ENCODE measurements at regions of chr11 and their contacts with region 1.

Region 1: DNA sequence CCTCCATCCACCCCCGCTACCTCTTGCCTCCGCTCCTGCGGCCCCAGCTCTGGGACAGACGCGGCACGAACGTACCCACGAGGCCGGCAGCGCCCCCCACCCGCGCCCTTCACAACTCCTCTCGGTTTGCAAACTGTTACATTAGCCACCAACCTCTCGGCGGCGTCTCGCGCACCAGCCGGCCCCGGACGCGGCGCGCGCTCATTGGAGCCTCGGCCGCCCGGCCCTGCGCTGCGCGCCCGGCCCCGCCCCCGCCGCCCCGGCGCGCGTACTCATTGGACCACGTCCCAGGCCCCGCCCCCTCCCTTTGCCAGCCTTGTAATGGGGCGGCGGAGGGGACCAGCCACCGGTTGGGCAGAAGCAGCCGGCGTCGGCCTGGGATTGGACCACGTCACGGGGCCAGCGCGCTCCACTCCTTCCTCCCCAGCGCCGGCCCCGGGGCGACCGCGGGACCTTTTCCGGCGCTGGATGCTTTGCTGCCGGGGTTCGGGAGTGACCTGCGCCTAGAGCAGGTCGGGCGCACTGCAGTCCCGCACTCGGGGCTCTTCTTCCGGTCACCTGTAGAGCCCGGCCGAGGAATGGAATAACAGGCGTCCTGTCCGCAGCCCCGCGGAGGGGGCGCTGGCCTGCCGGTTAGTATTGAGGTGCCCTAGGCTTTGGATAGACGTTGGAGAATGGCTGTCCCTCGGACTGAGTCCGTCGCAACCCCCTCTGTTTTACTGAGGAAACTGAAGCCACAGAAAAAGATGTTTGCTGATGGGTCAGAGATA is at the start of gene HYOU1:
- DNase-seq: peak; percentile 99
- H3K4me3 Mint-ChIP-seq: peak within 1 kb of the TSS; percentile 96
- H3K27ac Mint-ChIP-seq: peak within 1 kb of the TSS; percentile 94
- H3K4me1 Mint-ChIP-seq: peaks cover 38% of the 10 kb centered on the region
- H3K27me3 Mint-ChIP-seq: no peaks in the 10 kb centered on the region
- total RNA-seq, gene HYOU1: 127 to 136 TPM

Region 2: GRCh38 chr11:118980191-118980881 is 76.8 kb before region 1 on chr11:
- CTCF ChIA-PET with region 1: no interaction called
- POLR2A ChIA-PET with region 1: no interaction called
- intact Hi-C with region 1: no loop called
- DNase-seq: no peak
- H3K4me3 Mint-ChIP-seq: no peak overlapping the region
- H3K27ac Mint-ChIP-seq: no peak overlapping the region
- H3K4me1 Mint-ChIP-seq: no peaks in the 10 kb centered on the region
- H3K27me3 Mint-ChIP-seq: peaks cover 6% of the 10 kb centered on the region

Region 3: DNA sequence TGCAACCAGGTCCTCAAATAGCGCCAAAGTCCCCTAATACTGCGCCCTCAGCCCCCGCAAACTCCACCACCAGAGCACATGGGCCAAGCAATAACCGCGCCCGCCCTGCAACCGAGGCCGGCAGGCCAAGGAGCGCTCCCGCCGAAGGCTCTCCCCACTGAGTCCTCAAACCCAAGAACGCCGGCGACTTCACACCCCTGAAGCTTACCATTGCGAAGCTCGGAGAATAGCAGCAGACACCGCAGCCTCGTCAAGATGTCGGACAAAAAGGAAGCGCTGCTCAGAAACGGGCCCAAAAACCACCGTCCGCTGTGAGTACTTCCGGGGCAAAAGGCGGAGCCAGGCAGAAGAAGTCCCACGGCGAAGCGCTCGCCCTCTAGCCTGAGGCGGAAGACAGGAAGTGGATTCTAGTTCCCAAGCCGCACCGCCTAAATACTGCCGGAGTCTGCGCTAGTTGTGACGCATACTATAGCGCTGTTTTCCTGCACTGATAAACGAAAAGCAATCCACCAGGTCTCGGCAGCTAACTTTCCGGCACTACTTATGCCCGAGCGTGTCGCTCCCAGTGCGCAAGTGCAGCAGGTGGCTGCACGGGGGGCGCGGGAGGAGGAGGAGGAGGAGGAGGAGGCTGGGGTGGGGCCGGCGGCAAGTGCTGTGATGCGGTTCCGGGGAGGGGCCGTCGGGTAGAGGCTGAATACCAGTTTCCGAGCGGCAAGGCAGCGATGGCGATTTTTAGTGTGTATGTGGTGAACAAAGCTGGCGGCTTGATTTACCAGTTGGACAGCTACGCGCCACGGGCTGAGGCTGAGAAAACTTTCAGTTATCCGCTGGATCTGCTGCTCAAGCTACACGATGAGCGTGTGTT is 38.9 kb before region 1 on chr11 and contains the starts of genes RPS25 and TRAPPC4:
- CTCF ChIA-PET with region 1: interaction called, 5 read pairs
- POLR2A ChIA-PET with region 1: interaction called, 3 read pairs
- intact Hi-C with region 1: loop called (anchors 1 kb)
- DNase-seq: peak; percentile 98
- H3K4me3 Mint-ChIP-seq: peak within 1 kb of the TSS; percentile 99
- H3K27ac Mint-ChIP-seq: peak within 1 kb of the TSS; percentile 99
- H3K4me1 Mint-ChIP-seq: peaks cover 54% of the 10 kb centered on the region
- H3K27me3 Mint-ChIP-seq: no peaks in the 10 kb centered on the region
- total RNA-seq, gene RPS25: 1,852 to 1,922 TPM
- total RNA-seq, gene TRAPPC4: 86.4 to 87.8 TPM

Region 4: DNA sequence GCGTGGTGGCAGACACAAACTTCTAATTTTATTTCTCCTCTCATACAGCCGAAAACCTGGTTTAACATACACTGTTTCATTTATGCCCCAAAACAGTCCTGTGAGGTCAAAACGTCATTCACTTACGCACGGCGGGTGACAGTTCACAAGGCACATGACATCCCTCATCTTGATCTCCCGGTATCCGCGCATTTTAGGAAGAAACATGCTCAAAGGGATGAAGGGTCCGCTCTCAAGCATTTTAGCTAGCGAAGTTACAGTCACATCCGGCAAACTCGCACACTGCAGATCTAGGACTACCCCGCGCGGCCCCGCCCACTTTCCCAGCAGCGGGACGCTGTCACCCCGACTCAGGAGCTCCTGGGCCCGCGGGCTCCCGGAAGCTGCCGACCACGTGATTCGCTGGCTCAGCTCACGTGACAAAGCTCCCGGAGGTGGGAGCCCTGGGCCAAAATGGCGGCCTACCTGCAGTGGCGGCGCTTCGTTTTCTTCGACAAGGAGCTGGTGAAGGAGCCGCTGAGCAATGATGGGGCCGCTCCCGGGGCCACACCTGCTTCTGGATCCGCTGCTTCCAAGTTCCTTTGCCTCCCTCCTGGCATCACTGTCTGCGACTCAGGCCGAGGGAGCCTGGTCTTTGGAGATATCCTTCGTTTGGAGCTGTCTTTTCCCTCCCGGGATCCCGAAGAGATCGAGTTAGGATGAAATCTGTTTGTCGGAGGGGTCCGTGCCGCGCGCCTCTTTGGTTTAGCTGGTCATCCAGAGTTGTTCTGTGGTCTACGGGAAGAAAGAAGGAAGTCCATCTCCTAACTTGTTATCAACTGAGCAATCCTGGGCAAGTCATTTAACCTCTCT is 10.4 kb after region 1 on chr11 and contains the start of gene VPS11:
- CTCF ChIA-PET with region 1: interaction called, 12 read pairs
- POLR2A ChIA-PET with region 1: interaction called, 35 read pairs
- intact Hi-C with region 1: loop called (anchors 1 kb)
- DNase-seq: peak; percentile 99
- H3K4me3 Mint-ChIP-seq: peak within 1 kb of the TSS; percentile 96
- H3K27ac Mint-ChIP-seq: peak within 1 kb of the TSS; percentile 97
- H3K4me1 Mint-ChIP-seq: peaks cover 38% of the 10 kb centered on the region
- H3K27me3 Mint-ChIP-seq: no peaks in the 10 kb centered on the region
- total RNA-seq, gene VPS11: 19.2 to 21.1 TPM

Region 5: GRCh38 chr11:119084663-119085436 is 27.7 kb after region 1 on chr11 and contains the start of gene HMBS:
- CTCF ChIA-PET with region 1: interaction called, 4 read pairs
- POLR2A ChIA-PET with region 1: interaction called, 13 read pairs
- intact Hi-C with region 1: no loop called
- DNase-seq: peak; percentile 93
- H3K4me3 Mint-ChIP-seq: peak within 1 kb of the TSS; percentile 98
- H3K27ac Mint-ChIP-seq: peak within 1 kb of the TSS; percentile 95
- H3K4me1 Mint-ChIP-seq: peaks cover 21% of the 10 kb centered on the region
- H3K27me3 Mint-ChIP-seq: no peaks in the 10 kb centered on the region
- total RNA-seq, gene HMBS: 31.2 to 33.8 TPM

Region 6: GRCh38 chr11:119196833-119197483 is 139.8 kb after region 1 on chr11:
- CTCF ChIA-PET with region 1: interaction called, 6 read pairs
- POLR2A ChIA-PET with region 1: no interaction called
- intact Hi-C with region 1: loop called (anchors 2 kb)
- DNase-seq: peak; percentile 72
- H3K4me3 Mint-ChIP-seq: no peak overlapping the region
- H3K27ac Mint-ChIP-seq: no peak overlapping the region
- H3K4me1 Mint-ChIP-seq: peaks cover 3% of the 10 kb centered on the region
- H3K27me3 Mint-ChIP-seq: no peaks in the 10 kb centered on the region